ENCODE measurements at regions of chr2 and their contacts with region 1.

Region 1: DNA sequence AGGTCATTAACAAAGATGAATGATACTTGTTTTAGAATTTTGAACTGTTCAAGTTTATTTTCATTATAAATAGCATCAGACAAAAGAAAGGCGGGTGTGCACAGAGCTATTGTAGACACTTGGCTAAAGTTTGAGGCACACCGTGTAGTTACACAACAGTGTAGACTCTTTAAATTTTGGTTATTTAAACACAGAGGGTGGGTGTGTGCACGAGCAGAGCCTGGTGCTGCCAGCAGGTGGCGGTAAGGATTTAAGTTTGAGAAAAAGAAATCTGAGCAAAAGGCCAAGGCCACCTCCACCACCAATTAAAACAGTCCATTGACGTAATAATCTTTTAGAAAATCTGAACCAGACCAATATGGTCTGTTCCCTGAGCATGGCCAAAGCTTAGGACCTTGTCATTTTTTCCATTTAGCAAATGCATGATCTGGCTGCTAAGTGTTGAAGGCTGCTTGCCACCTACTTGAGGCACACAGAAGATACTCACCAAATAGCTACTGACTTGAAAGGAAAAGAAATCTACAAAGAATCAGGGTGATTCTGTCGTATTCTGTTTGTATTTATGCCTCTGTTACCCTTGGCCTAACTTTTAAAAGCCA is 14.3 kb downstream of the COPS7B start:
- DNase-seq: peak; percentile 71
- H3K4me3 Mint-ChIP-seq: no peak overlapping the region
- H3K27ac Mint-ChIP-seq: no peak overlapping the region
- H3K4me1 Mint-ChIP-seq: peaks cover 5% of the 10 kb centered on the region
- H3K27me3 Mint-ChIP-seq: no peaks in the 10 kb centered on the region

Region 2: GRCh38 chr2:231786177-231786916 is 14.2 kb before region 1 on chr2 and contains the start of gene COPS7B:
- CTCF ChIA-PET with region 1: interaction called, 10 read pairs
- intact Hi-C with region 1: no loop called
- DNase-seq: peak; percentile 88
- H3K4me3 Mint-ChIP-seq: peak within 1 kb of the TSS; percentile 86
- H3K27ac Mint-ChIP-seq: peak within 1 kb of the TSS; percentile 84
- H3K4me1 Mint-ChIP-seq: peaks cover 66% of the 10 kb centered on the region
- H3K27me3 Mint-ChIP-seq: no peaks in the 10 kb centered on the region
- total RNA-seq, gene COPS7B: 47.3 to 52.8 TPM

Region 3: GRCh38 chr2:231816327-231817026 is 15.9 kb after region 1 on chr2:
- CTCF ChIA-PET with region 1: interaction called, 16 read pairs
- intact Hi-C with region 1: no loop called
- DNase-seq: no peak
- H3K4me3 Mint-ChIP-seq: no peak overlapping the region
- H3K27ac Mint-ChIP-seq: no peak overlapping the region
- H3K4me1 Mint-ChIP-seq: no peaks in the 10 kb centered on the region
- H3K27me3 Mint-ChIP-seq: no peaks in the 10 kb centered on the region

Region 4: DNA sequence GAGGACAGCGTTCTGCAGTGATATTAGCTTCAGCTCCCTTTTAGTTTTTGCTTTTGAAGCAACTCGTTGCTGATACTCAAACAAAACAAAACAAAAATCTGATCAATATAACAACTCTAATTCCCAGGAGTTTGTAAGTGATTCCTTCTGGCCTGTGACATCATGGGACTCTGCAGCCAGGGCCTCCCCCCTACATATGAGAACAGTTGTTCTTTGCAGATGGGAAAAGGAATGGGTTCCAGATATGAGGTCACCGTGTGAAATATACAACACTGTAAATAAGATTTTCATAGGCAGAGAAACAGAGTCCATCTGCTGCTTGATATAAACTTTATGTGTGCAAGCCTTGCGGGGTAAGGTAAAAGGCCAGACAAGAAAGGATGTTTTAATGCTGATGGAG is 217.6 kb after region 1 on chr2:
- CTCF ChIA-PET with region 1: no interaction called
- intact Hi-C with region 1: no loop called
- DNase-seq: no peak
- H3K4me3 Mint-ChIP-seq: no peak overlapping the region
- H3K27ac Mint-ChIP-seq: no peak overlapping the region
- H3K4me1 Mint-ChIP-seq: peaks cover 14% of the 10 kb centered on the region
- H3K27me3 Mint-ChIP-seq: no peaks in the 10 kb centered on the region